Activated naive CD4-positive, alpha-beta T cell treated with anti-CD3 and anti-CD28 coated beads for 36 hours (primary cell): ENCODE measurements at regions of chr2 and their contacts with region 1.

Region 1: GRCh38 chr2:159118115-159118858 is 149.8 kb downstream of the TANC1 start:
- DNase-seq: peak; percentile 93
- H3K4me3 Mint-ChIP-seq: no peak overlapping the region
- H3K27ac Mint-ChIP-seq: no peak overlapping the region
- H3K4me1 Mint-ChIP-seq: peaks cover 4% of the 10 kb centered on the region
- H3K27me3 Mint-ChIP-seq: no peaks in the 10 kb centered on the region

Region 2: GRCh38 chr2:158701101-158701500 is 417.2 kb before region 1 on chr2:
- CTCF ChIA-PET with region 1: no interaction called
- intact Hi-C with region 1: no loop called
- DNase-seq: no peak
- H3K4me3 Mint-ChIP-seq: no peak overlapping the region
- H3K27ac Mint-ChIP-seq: no peak overlapping the region
- H3K4me1 Mint-ChIP-seq: no peaks in the 10 kb centered on the region
- H3K27me3 Mint-ChIP-seq: peaks cover 10% of the 10 kb centered on the region

Region 3: GRCh38 chr2:158914731-158915130 is 203.6 kb before region 1 on chr2:
- CTCF ChIA-PET with region 1: interaction called, 11 read pairs
- intact Hi-C with region 1: no loop called
- DNase-seq: no peak
- H3K4me3 Mint-ChIP-seq: no peak overlapping the region
- H3K27ac Mint-ChIP-seq: no peak overlapping the region
- H3K4me1 Mint-ChIP-seq: no peaks in the 10 kb centered on the region
- H3K27me3 Mint-ChIP-seq: no peaks in the 10 kb centered on the region

Region 4: GRCh38 chr2:158968396-158969161 is 149.7 kb before region 1 on chr2 and contains the start of gene TANC1:
- CTCF ChIA-PET with region 1: interaction called, 3 read pairs
- intact Hi-C with region 1: loop called (anchors 2 kb)
- DNase-seq: peak; percentile 85
- H3K4me3 Mint-ChIP-seq: peak within 1 kb of the TSS; percentile 80
- H3K27ac Mint-ChIP-seq: no peak within 1 kb of the TSS
- H3K4me1 Mint-ChIP-seq: peaks cover 14% of the 10 kb centered on the region
- H3K27me3 Mint-ChIP-seq: peaks cover 50% of the 10 kb centered on the region
- total RNA-seq, gene TANC1: 2.0 to 2.3 TPM

Region 5: DNA sequence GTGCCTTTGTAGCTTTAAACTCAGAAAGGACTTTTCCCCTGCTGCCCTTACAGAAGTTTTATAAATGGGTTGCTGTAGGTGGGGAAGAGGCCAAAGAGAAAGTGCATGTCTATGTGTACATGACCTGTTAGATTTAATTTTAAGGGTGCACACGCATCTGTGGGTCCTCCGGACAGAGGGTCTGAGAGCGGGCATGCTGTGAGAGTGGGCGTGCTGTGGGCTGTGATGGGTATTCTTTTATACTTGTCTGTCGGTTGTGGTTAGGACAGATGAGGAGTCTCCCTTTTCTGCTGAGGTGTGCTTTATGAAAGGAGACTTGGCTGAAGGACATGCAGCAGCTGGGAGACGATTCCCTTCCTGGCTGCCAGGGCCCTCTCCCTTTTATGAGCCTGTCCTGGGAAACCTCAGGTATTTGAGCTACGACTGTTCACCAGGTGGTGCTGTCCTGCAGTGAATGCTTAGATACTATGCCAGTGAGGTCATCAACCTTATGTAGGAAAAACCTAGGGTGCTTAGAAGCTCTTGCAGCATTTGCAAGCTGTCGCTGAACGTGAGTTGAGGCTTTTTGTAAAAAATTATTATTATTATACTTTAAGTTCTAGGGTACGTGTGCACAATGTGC is 82.4 kb before region 1 on chr2:
- CTCF ChIA-PET with region 1: interaction called, 7 read pairs
- intact Hi-C with region 1: loop called (anchors 1 kb)
- DNase-seq: peak; percentile 47
- H3K4me3 Mint-ChIP-seq: no peak overlapping the region
- H3K27ac Mint-ChIP-seq: no peak overlapping the region
- H3K4me1 Mint-ChIP-seq: no peaks in the 10 kb centered on the region
- H3K27me3 Mint-ChIP-seq: no peaks in the 10 kb centered on the region

Region 6: GRCh38 chr2:159671047-159671446 is 552.8 kb after region 1 on chr2:
- CTCF ChIA-PET with region 1: no interaction called
- intact Hi-C with region 1: no loop called
- DNase-seq: no peak
- H3K4me3 Mint-ChIP-seq: no peak overlapping the region
- H3K27ac Mint-ChIP-seq: no peak overlapping the region
- H3K4me1 Mint-ChIP-seq: no peaks in the 10 kb centered on the region
- H3K27me3 Mint-ChIP-seq: no peaks in the 10 kb centered on the region